B cell (primary cell): ENCODE measurements at regions of chr12 and their contacts with region 1.

Region 1: GRCh38 chr12:56751712-56752598 is at the start of gene PRIM1:
- DNase-seq: peak; percentile 88
- ATAC-seq: peak; percentile 82
- H3K4me3 ChIP-seq: peak within 1 kb of the TSS; percentile 90 to 100 (median 97)
- H3K4me3 Mint-ChIP-seq: peak within 1 kb of the TSS; percentile 97
- H3K27ac ChIP-seq: peak within 1 kb of the TSS; percentile 79 to 80
- H3K27ac Mint-ChIP-seq: peak within 1 kb of the TSS; percentile 96
- H3K4me1 ChIP-seq: peaks cover 38% of the 10 kb centered on the region in 2 donors
- H3K4me1 Mint-ChIP-seq: peaks cover 44% of the 10 kb centered on the region
- H3K27me3 ChIP-seq: no peaks in the 10 kb centered on the region
- H3K27me3 Mint-ChIP-seq: no peaks in the 10 kb centered on the region
- CTCF ChIP-seq: peak; percentile 21
- total RNA-seq, gene PRIM1: 25.2 and 25.4 TPM in 2 replicates

Region 2: GRCh38 chr12:56521590-56522371 is 230.2 kb before region 1 on chr12 and contains the start of gene RBMS2:
- CTCF ChIA-PET with region 1: no interaction called
- POLR2A ChIA-PET with region 1: no interaction called
- intact Hi-C with region 1: loop called (anchors 10 kb)
- DNase-seq: peak; percentile 66
- ATAC-seq: peak; percentile 76
- H3K4me3 ChIP-seq: peak within 1 kb of the TSS; percentile 41 to 48 (median 41)
- H3K4me3 Mint-ChIP-seq: peak within 1 kb of the TSS; percentile 85
- H3K27ac ChIP-seq: peak within 1 kb of the TSS in 1 of 2 donors; percentile 54
- H3K27ac Mint-ChIP-seq: peak within 1 kb of the TSS; percentile 47
- H3K4me1 ChIP-seq: peaks cover 12 to 20% of the 10 kb centered on the region in 2 donors
- H3K4me1 Mint-ChIP-seq: peaks cover 22% of the 10 kb centered on the region
- H3K27me3 ChIP-seq: no peaks in the 10 kb centered on the region
- H3K27me3 Mint-ChIP-seq: peaks cover 4% of the 10 kb centered on the region
- CTCF ChIP-seq: no peak
- total RNA-seq, gene RBMS2: 5.0 and 7.6 TPM in 2 replicates

Region 3: GRCh38 chr12:56785141-56785865 is 33.3 kb after region 1 on chr12:
- CTCF ChIA-PET with region 1: no interaction called
- POLR2A ChIA-PET with region 1: no interaction called
- intact Hi-C with region 1: no loop called
- DNase-seq: no peak
- ATAC-seq: no peak
- H3K4me3 ChIP-seq: no peak overlapping the region
- H3K4me3 Mint-ChIP-seq: no peak overlapping the region
- H3K27ac ChIP-seq: no peak overlapping the region
- H3K27ac Mint-ChIP-seq: no peak overlapping the region
- H3K4me1 ChIP-seq: no peaks in the 10 kb centered on the region
- H3K4me1 Mint-ChIP-seq: no peaks in the 10 kb centered on the region
- H3K27me3 ChIP-seq: no peaks in the 10 kb centered on the region
- H3K27me3 Mint-ChIP-seq: no peaks in the 10 kb centered on the region
- CTCF ChIP-seq: no peak

Region 4: DNA sequence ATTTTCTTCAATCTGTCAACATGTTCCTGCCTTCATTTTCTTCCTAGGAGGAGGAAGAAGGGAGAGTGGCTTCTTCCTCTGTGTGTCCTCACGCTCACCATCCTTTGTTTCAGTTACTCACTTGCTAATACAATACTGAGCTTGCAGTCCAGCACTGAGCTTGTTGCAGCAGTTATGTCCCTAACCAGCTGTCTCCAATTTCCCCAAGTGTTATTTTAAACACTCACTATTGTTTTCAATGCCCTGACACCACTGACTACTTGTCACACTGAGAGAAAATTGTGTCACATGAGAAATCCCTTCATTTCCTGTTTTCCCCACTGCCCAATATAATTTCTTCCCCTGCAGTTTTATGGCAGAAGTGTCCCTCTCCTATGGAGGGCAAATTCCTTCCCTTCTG is 64.5 kb after region 1 on chr12:
- CTCF ChIA-PET with region 1: no interaction called
- POLR2A ChIA-PET with region 1: no interaction called
- intact Hi-C with region 1: no loop called
- DNase-seq: no peak
- ATAC-seq: no peak
- H3K4me3 ChIP-seq: no peak overlapping the region
- H3K4me3 Mint-ChIP-seq: no peak overlapping the region
- H3K27ac ChIP-seq: no peak overlapping the region
- H3K27ac Mint-ChIP-seq: no peak overlapping the region
- H3K4me1 ChIP-seq: no peaks in the 10 kb centered on the region
- H3K4me1 Mint-ChIP-seq: no peaks in the 10 kb centered on the region
- H3K27me3 ChIP-seq: peaks cover 0 to 4% (median 2%) of the 10 kb centered on the region in 4 experiments
- H3K27me3 Mint-ChIP-seq: peaks cover 27% of the 10 kb centered on the region
- CTCF ChIP-seq: no peak

Region 5: GRCh38 chr12:57005980-57006808 is 254.2 kb after region 1 on chr12 and contains the start of gene ZBTB39:
- CTCF ChIA-PET with region 1: interaction called, 23 read pairs
- POLR2A ChIA-PET with region 1: interaction called, 8 read pairs
- intact Hi-C with region 1: loop called (anchors 1 kb)
- DNase-seq: peak; percentile 84
- ATAC-seq: peak; percentile 92
- H3K4me3 ChIP-seq: peak within 1 kb of the TSS; percentile 39 to 87 (median 70)
- H3K4me3 Mint-ChIP-seq: peak within 1 kb of the TSS; percentile 91
- H3K27ac ChIP-seq: peak within 1 kb of the TSS; percentile 43 to 86
- H3K27ac Mint-ChIP-seq: peak within 1 kb of the TSS; percentile 93
- H3K4me1 ChIP-seq: peaks cover 16 to 21% of the 10 kb centered on the region in 2 donors
- H3K4me1 Mint-ChIP-seq: peaks cover 41% of the 10 kb centered on the region
- H3K27me3 ChIP-seq: no peaks in the 10 kb centered on the region
- H3K27me3 Mint-ChIP-seq: no peaks in the 10 kb centered on the region
- CTCF ChIP-seq: peak; percentile 61
- total RNA-seq, gene ZBTB39: 13.9 and 15.6 TPM in 2 replicates

Region 6: DNA sequence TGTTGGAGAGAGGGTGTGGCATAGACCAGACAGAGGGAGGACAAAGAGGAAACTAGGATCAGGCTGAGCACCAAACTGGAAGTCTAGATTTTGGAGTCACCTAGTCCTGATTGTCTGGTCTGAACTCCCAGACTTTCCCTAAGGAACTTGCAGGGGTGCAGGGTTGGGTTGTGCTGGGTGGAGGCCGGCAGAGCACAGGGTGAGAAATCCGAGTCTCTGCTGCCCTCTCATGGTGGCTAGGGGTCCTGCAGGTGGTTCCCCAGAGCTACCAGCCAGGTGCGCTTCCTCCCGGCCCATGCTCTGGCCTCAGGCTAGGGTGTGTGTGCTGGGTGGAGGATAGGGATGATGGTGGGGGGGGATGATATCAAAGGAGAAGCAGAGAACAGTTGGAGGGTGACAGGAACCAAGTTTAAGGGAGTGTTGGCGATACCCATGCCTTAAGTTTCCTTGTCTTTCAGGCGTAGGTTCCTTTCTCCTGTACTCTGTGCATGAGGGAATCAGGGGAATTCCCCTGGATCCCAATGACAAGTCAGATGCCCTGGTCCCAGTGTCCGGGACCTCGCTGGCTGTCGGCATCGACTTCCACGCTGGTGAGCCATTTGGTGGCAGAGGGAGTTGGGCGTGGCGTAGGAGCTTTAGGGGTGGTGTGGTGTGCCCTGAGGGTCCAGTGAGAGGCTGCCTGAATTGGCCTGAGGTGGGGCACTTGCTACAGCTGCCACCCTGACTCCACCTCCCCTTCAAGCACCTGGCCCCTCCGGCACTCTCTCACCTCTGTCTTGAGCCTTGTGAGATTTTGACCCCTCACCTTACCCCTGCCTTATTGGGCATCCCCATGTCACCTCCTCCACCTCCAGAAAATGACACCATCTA is 431.2 kb after region 1 on chr12:
- CTCF ChIA-PET with region 1: interaction called, 3 read pairs
- POLR2A ChIA-PET with region 1: no interaction called
- intact Hi-C with region 1: loop called (anchors 1 kb)
- DNase-seq: peak; percentile 86
- ATAC-seq: peak; percentile 99
- H3K4me3 ChIP-seq: no peak overlapping the region
- H3K4me3 Mint-ChIP-seq: no peak overlapping the region
- H3K27ac ChIP-seq: no peak overlapping the region
- H3K27ac Mint-ChIP-seq: peak overlapping the region; percentile 1
- H3K4me1 ChIP-seq: peaks cover 0 to 6% of the 10 kb centered on the region in 2 donors
- H3K4me1 Mint-ChIP-seq: peaks cover 5% of the 10 kb centered on the region
- H3K27me3 ChIP-seq: no peaks in the 10 kb centered on the region
- H3K27me3 Mint-ChIP-seq: peaks cover 2% of the 10 kb centered on the region
- CTCF ChIP-seq: peak; percentile 88

Region 7: DNA sequence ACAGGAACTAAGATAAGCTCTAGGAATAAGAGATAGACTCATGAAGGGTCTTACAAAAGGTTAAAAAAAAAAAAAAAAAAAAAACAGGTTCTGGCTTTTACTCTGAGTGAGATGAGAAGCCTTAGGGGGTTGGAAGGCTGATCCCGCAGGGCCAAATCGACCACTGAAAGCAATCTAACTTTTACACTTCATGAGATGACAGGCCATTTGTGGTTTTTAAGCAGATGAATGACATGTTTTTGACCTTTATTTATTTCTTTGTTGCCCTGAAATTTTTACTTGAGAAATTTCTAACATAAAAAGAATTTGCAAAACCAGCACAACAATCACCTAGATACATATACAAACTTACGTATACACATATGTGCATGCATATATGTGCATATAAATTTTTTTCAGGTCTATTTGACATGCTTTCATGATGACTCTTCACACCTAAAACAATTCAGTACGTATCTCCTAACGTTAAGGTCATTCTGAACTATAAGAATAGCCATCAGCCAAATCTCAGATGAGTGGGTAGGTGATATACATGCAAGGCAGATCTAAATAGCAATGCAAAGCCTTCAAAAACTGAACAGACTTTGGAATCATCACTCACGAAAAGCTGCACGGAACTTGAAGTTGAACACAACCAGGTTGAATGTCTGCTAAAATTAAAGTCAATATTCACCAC is 591.9 kb after region 1 on chr12:
- CTCF ChIA-PET with region 1: no interaction called
- POLR2A ChIA-PET with region 1: no interaction called
- intact Hi-C with region 1: no loop called
- DNase-seq: no peak
- ATAC-seq: no peak
- H3K4me3 ChIP-seq: no peak overlapping the region
- H3K4me3 Mint-ChIP-seq: no peak overlapping the region
- H3K27ac ChIP-seq: no peak overlapping the region
- H3K27ac Mint-ChIP-seq: no peak overlapping the region
- H3K4me1 ChIP-seq: no peaks in the 10 kb centered on the region
- H3K4me1 Mint-ChIP-seq: peaks cover 5% of the 10 kb centered on the region
- H3K27me3 ChIP-seq: no peaks in the 10 kb centered on the region
- H3K27me3 Mint-ChIP-seq: no peaks in the 10 kb centered on the region
- CTCF ChIP-seq: no peak

Region 8: DNA sequence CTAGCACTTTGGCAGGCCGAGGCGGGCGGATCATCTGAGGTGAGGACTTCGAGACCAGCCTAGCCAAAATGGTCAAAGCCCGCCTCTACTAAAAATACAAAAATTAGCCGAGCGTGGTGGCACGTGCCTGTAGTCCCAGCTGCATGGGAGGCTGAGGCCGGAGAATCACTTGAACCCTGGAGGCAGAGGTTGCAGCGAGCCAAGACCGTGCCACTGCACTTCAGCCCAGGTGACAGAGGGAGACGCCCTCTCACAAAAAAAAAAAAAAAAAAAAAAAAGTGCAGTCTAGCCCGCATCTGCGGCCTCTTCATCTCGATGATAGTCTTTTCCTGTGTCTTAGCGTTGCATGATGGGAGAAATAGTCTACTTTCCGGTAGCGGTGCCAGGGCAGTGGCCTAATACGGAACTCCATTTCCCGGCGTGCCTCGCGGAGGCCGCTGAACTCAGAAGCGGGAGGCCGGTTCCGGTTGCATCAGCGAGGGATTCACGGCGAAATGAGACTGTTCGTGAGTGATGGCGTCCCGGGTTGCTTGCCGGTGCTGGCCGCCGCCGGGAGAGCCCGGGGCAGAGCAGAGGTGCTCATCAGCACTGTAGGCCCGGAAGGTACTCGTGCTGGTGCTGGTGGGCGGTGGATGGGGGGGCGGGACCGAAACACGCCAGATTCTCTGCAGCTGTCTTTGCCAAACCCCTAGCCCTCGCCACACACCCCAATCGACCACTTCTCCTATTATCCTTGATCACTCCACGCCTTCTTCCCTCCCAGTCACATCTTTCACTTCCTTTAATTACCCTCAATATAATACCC is 735.8 kb after region 1 on chr12 and contains the start of gene MARS1:
- CTCF ChIA-PET with region 1: no interaction called
- POLR2A ChIA-PET with region 1: no interaction called
- intact Hi-C with region 1: loop called (anchors 2 kb)
- DNase-seq: peak; percentile 96
- ATAC-seq: peak; percentile 98
- H3K4me3 ChIP-seq: peak within 1 kb of the TSS; percentile 66 to 95 (median 86)
- H3K4me3 Mint-ChIP-seq: peak within 1 kb of the TSS; percentile 89
- H3K27ac ChIP-seq: peak within 1 kb of the TSS; percentile 42 to 86
- H3K27ac Mint-ChIP-seq: peak within 1 kb of the TSS; percentile 93
- H3K4me1 ChIP-seq: peaks cover 20 to 25% of the 10 kb centered on the region in 2 donors
- H3K4me1 Mint-ChIP-seq: peaks cover 31% of the 10 kb centered on the region
- H3K27me3 ChIP-seq: no peaks in the 10 kb centered on the region
- H3K27me3 Mint-ChIP-seq: no peaks in the 10 kb centered on the region
- CTCF ChIP-seq: no peak
- total RNA-seq, gene MARS1: 183 and 193 TPM in 2 replicates

Region 9: GRCh38 chr12:58728397-58728796 is 1976.4 kb after region 1 on chr12:
- CTCF ChIA-PET with region 1: no interaction called
- POLR2A ChIA-PET with region 1: no interaction called
- intact Hi-C with region 1: no loop called
- DNase-seq: no peak
- ATAC-seq: no peak
- H3K4me3 ChIP-seq: no peak overlapping the region
- H3K4me3 Mint-ChIP-seq: no peak overlapping the region
- H3K27ac ChIP-seq: no peak overlapping the region
- H3K27ac Mint-ChIP-seq: no peak overlapping the region
- H3K4me1 ChIP-seq: no peaks in the 10 kb centered on the region
- H3K4me1 Mint-ChIP-seq: no peaks in the 10 kb centered on the region
- H3K27me3 ChIP-seq: no peaks in the 10 kb centered on the region
- H3K27me3 Mint-ChIP-seq: no peaks in the 10 kb centered on the region
- CTCF ChIP-seq: no peak